CD8-positive, alpha-beta T cell (primary cell): ENCODE measurements at regions of chr7 and their contacts with region 1.

Region 1: GRCh38 chr7:113118074-113118959 is at the start of gene SMIM30:
- DNase-seq: peak; percentile 76 to 93 (median 90)
- ATAC-seq: peak; percentile 100
- H3K4me3 ChIP-seq: peak within 1 kb of the TSS; percentile 58 to 66
- H3K4me3 Mint-ChIP-seq: peak within 1 kb of the TSS; percentile 96
- H3K27ac ChIP-seq: peak within 1 kb of the TSS; percentile 55 to 73
- H3K27ac Mint-ChIP-seq: peak within 1 kb of the TSS; percentile 98
- H3K4me1 ChIP-seq: peaks cover 6% of the 10 kb centered on the region
- H3K4me1 Mint-ChIP-seq: peaks cover 21% of the 10 kb centered on the region
- H3K27me3 ChIP-seq: no peaks in the 10 kb centered on the region
- H3K27me3 Mint-ChIP-seq: no peaks in the 10 kb centered on the region
- CTCF ChIP-seq: no peak
- total RNA-seq, gene SMIM30: 3.5 to 4.8 TPM

Region 2: GRCh38 chr7:112390167-112390566 is 728.1 kb before region 1 on chr7:
- CTCF ChIA-PET with region 1: no interaction called
- POLR2A ChIA-PET with region 1: no interaction called
- intact Hi-C with region 1: loop called in 1 of 2 experiments (anchors 5 kb)
- DNase-seq: no peak
- ATAC-seq: no peak
- H3K4me3 ChIP-seq: no peak overlapping the region
- H3K4me3 Mint-ChIP-seq: peak overlapping the region; percentile 6
- H3K27ac ChIP-seq: no peak overlapping the region
- H3K27ac Mint-ChIP-seq: no peak overlapping the region
- H3K4me1 ChIP-seq: peaks cover 7% of the 10 kb centered on the region
- H3K4me1 Mint-ChIP-seq: peaks cover 12% of the 10 kb centered on the region
- H3K27me3 ChIP-seq: no peaks in the 10 kb centered on the region
- H3K27me3 Mint-ChIP-seq: peaks cover 3% of the 10 kb centered on the region
- CTCF ChIP-seq: no peak

Region 3: DNA sequence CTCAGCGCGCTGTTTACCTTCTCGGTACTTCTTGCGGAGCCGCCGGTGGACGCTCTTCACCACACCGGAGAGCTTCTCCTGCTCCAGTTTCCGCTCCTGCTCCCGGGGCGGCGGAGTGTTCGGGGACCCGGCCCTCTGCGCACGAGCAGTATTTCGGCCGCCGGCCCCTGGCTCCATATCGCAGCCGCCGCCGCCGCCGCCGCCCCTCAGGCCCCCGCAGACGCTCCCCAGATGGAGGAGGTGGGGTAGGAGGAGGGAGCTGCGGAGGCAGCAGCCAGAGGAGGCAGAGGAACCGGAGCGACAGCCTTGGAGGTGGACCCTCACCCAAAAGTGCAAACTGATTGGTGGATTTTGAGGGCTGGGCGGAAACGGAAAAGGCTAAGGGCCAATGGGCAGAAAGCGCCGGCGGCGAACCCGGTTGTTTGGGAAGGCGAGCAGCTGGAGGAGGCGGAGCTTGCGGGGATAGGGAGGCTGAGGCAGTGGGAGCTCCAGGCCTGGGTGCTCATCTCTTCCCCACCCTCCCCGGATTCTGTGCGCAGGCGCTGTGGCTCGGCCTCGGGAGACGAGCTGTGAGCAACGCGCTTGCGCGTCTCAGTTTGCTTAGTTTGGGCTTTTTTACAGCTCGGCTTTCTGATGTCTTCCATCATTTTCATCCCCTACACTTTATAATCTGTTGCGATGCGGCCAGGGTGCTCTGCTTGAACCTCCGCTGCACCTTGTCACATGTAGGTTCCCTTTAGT is 178.6 kb before region 1 on chr7:
- CTCF ChIA-PET with region 1: no interaction called
- POLR2A ChIA-PET with region 1: no interaction called
- intact Hi-C with region 1: loop called (anchors 1 to 2 kb)
- DNase-seq: peak; percentile 98 to 100 (median 99)
- ATAC-seq: peak; percentile 94
- H3K4me3 ChIP-seq: peak overlapping the region; percentile 76 to 89
- H3K4me3 Mint-ChIP-seq: peak overlapping the region; percentile 93
- H3K27ac ChIP-seq: peak overlapping the region; percentile 75
- H3K27ac Mint-ChIP-seq: peak overlapping the region; percentile 92
- H3K4me1 ChIP-seq: peaks cover 27% of the 10 kb centered on the region
- H3K4me1 Mint-ChIP-seq: peaks cover 42% of the 10 kb centered on the region
- H3K27me3 ChIP-seq: no peaks in the 10 kb centered on the region
- H3K27me3 Mint-ChIP-seq: no peaks in the 10 kb centered on the region
- CTCF ChIP-seq: no peak

Region 4: DNA sequence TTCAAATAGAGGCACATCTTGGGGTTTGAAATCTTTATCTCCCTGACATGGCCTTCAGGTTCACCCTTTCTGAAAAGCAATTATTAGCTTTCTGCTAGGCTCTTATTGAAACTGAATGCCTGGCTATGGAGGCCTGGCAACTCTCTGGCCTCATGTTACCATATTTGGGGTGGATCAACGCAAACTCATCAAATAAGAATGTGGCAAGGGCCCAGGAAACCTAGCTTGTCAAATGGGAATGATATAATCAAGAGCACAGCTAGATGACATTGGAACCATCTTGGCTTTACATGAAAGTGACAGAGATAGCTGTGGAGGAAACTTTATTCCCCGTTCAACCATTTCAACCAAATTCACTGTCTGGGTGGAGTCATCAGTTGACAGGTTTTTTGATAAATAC is 202.9 kb after region 1 on chr7:
- CTCF ChIA-PET with region 1: no interaction called
- POLR2A ChIA-PET with region 1: no interaction called
- intact Hi-C with region 1: no loop called
- DNase-seq: no peak
- ATAC-seq: no peak
- H3K4me3 ChIP-seq: no peak overlapping the region
- H3K4me3 Mint-ChIP-seq: no peak overlapping the region
- H3K27ac ChIP-seq: no peak overlapping the region
- H3K27ac Mint-ChIP-seq: no peak overlapping the region
- H3K4me1 ChIP-seq: no peaks in the 10 kb centered on the region
- H3K4me1 Mint-ChIP-seq: no peaks in the 10 kb centered on the region
- H3K27me3 ChIP-seq: no peaks in the 10 kb centered on the region
- H3K27me3 Mint-ChIP-seq: no peaks in the 10 kb centered on the region
- CTCF ChIP-seq: no peak

Region 5: DNA sequence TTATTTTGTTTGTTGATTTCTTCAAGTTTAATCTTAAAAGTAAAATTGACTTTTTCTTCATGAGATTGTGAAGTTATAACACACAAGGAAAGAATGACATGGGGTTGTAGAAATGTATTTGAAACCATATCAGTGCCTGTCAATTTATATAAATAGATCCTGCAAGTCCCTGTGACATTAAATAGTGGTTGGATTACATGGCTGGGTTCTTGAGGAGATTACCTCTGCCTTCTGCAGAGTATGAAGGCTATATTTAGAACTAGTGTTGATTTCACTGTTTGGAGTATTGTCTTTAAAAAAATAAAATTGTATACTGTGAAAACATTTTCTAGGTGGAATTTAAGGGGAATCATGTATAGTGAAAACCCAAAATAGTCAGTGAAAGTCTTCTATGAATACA is 385.8 kb after region 1 on chr7:
- CTCF ChIA-PET with region 1: no interaction called
- POLR2A ChIA-PET with region 1: no interaction called
- intact Hi-C with region 1: no loop called
- DNase-seq: no peak
- ATAC-seq: no peak
- H3K4me3 ChIP-seq: no peak overlapping the region
- H3K4me3 Mint-ChIP-seq: no peak overlapping the region
- H3K27ac ChIP-seq: no peak overlapping the region
- H3K27ac Mint-ChIP-seq: no peak overlapping the region
- H3K4me1 ChIP-seq: no peaks in the 10 kb centered on the region
- H3K4me1 Mint-ChIP-seq: no peaks in the 10 kb centered on the region
- H3K27me3 ChIP-seq: no peaks in the 10 kb centered on the region
- H3K27me3 Mint-ChIP-seq: no peaks in the 10 kb centered on the region
- CTCF ChIP-seq: no peak